ENCODE measurements at regions of chr14 and their contacts with region 1.

Region 1: DNA sequence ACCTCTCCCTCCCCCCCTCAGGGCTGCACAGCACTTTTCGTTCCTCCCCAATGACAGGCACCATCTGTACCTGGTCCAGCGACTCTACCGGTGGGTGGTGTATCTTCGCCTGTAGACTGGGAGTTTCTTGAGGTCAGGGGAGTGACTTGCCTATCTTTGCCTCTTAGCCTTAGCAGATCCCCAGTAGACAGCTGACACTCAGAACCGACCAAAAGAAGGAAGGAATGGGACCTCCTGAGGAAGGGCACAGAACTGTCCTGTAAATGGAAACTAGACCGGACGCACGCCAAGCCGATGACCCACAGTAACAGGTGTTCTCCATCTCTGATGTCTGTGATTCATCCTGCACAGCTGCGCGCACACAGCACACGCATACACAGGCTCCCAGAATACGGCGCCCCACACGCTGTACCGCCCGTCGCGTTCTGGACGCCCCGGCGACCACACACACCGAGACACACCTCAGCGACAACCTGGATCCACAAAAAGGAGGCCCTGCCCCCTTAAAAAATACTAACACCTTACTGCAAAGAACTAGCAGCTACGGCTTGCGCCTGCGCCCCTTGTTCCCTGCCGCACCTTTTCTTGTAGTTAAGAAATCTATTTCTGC is 673 bp upstream of the TTC9 start:
- DNase-seq: peak; percentile 77
- H3K4me3 Mint-ChIP-seq: peak overlapping the region; percentile 92
- H3K27ac Mint-ChIP-seq: peak overlapping the region; percentile 90
- H3K4me1 Mint-ChIP-seq: peaks cover 43% of the 10 kb centered on the region
- H3K27me3 Mint-ChIP-seq: no peaks in the 10 kb centered on the region

Region 2: DNA sequence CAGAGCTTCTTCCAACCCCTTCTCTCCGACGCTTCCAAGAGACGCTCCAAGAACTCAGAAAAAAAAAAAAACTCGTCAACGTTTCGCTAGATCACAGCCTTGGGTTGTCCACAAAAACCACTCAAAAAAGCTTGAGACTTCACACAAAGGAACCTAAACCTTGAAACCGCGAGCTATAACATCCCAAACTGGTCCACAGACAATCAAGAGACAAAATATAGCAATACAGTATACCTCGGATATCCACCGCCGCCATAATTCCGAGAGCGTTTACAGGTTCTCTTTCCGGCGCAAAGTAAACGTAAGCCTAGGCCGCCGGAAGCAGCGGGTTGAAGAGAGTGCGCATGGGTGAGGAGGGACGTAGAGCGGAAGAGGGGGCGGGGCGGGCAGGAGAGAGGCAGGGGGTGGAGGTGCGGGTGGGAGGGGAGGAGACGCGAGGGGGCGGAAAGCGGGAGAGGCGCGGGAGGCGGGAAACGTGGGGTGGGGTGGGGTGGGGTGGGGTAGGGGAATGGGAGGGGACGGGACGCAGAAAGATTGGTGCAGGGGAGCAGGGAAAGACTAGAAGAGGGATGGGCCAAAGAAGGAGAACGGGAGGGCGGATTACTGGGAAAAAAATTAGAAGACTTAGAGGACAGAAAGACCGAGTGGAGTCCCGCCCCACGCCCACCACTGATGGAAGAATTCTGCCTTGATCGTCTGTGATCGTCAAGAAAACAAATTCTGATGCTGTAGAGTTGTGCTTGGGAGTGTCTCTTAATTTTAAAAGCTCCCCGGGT is 40.5 kb before region 1 on chr14 and contains the start of gene MED6:
- CTCF ChIA-PET with region 1: no interaction called
- intact Hi-C with region 1: loop called (anchors 2 kb)
- DNase-seq: peak; percentile 96
- H3K4me3 Mint-ChIP-seq: peak within 1 kb of the TSS; percentile 98
- H3K27ac Mint-ChIP-seq: peak within 1 kb of the TSS; percentile 93
- H3K4me1 Mint-ChIP-seq: peaks cover 23% of the 10 kb centered on the region
- H3K27me3 Mint-ChIP-seq: peaks cover 2% of the 10 kb centered on the region
- total RNA-seq, gene MED6: 48.5 to 48.9 TPM

Region 3: DNA sequence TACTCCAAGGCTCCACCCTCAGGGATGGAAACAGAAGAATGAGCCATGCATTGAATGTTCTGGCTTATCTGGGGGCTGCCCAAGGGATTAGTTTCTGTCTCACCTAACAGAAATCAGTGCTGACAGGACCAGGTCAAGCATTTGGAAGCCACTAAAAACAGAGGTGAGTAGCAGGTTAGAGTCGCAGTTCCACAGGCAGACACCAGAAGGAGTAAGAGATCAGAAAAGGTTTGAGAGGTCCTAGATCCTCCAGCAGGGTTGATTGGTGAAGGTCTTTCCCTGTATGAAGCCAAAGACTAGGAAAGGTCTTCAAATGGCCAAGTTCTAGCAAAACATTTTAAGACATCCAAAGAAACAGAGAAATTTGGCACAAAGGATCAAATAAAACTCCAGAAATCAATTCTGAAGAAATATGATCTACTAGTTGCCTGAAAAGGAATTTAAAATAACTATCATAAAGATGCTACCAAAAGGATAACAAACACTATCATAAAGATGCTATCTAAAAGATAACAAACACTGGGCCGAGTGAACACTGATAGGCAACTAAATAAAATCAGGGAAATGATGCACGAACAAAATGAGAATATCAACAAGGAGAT is 18.8 kb before region 1 on chr14:
- CTCF ChIA-PET with region 1: interaction called, 4 read pairs
- intact Hi-C with region 1: loop called (anchors 1 kb)
- DNase-seq: peak; percentile 72
- H3K4me3 Mint-ChIP-seq: no peak overlapping the region
- H3K27ac Mint-ChIP-seq: no peak overlapping the region
- H3K4me1 Mint-ChIP-seq: no peaks in the 10 kb centered on the region
- H3K27me3 Mint-ChIP-seq: no peaks in the 10 kb centered on the region

Region 4: DNA sequence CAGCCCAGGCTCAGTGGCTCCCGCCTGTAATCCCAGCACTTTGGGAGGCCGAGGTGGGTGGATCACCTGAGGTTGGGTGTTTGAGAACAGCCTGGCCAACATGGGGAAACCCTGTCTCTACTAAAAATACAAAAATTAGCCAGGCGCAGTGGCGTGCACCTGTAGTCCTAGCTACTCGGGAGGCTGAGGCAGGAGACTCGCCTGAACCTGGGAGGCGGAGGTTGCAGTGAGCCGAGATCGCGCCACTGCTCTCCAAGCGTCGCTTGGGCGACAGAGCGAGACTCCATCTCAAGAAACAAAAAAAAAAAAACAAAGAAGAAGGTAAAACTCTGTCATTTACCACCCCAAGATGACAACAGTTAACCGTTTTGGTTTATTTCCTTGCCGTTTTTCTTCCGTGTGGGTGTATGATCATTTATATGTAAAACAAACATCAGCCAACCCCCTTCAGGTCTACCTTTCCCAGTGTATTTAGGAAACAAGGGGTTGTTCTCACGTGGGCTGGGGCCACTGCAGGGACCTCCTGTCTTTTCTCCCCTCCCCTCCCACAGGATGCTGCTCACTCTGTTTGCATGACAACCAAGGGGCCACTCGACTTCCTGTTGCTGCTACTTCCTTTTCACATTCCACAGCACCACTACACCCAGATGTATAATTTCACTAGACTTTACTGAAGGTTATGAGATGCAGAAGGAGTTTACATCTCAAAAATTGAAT is 14.2 kb after region 1 on chr14:
- CTCF ChIA-PET with region 1: interaction called, 11 read pairs
- intact Hi-C with region 1: loop called (anchors 1 kb)
- DNase-seq: peak; percentile 92
- H3K4me3 Mint-ChIP-seq: peak overlapping the region; percentile 83
- H3K27ac Mint-ChIP-seq: peak overlapping the region; percentile 98
- H3K4me1 Mint-ChIP-seq: peaks cover 81% of the 10 kb centered on the region
- H3K27me3 Mint-ChIP-seq: no peaks in the 10 kb centered on the region

Region 5: GRCh38 chr14:70660949-70661893 is 20.2 kb after region 1 on chr14:
- CTCF ChIA-PET with region 1: interaction called, 11 read pairs
- intact Hi-C with region 1: loop called (anchors 1 kb)
- DNase-seq: peak; percentile 82
- H3K4me3 Mint-ChIP-seq: peak overlapping the region; percentile 62
- H3K27ac Mint-ChIP-seq: peak overlapping the region; percentile 96
- H3K4me1 Mint-ChIP-seq: peaks cover 91% of the 10 kb centered on the region
- H3K27me3 Mint-ChIP-seq: no peaks in the 10 kb centered on the region

Region 6: GRCh38 chr14:70714055-70714621 is 73.1 kb after region 1 on chr14:
- CTCF ChIA-PET with region 1: interaction called, 10 read pairs
- intact Hi-C with region 1: loop called (anchors 1 kb)
- DNase-seq: peak; percentile 71
- H3K4me3 Mint-ChIP-seq: no peak overlapping the region
- H3K27ac Mint-ChIP-seq: no peak overlapping the region
- H3K4me1 Mint-ChIP-seq: peaks cover 2% of the 10 kb centered on the region
- H3K27me3 Mint-ChIP-seq: no peaks in the 10 kb centered on the region

Region 7: DNA sequence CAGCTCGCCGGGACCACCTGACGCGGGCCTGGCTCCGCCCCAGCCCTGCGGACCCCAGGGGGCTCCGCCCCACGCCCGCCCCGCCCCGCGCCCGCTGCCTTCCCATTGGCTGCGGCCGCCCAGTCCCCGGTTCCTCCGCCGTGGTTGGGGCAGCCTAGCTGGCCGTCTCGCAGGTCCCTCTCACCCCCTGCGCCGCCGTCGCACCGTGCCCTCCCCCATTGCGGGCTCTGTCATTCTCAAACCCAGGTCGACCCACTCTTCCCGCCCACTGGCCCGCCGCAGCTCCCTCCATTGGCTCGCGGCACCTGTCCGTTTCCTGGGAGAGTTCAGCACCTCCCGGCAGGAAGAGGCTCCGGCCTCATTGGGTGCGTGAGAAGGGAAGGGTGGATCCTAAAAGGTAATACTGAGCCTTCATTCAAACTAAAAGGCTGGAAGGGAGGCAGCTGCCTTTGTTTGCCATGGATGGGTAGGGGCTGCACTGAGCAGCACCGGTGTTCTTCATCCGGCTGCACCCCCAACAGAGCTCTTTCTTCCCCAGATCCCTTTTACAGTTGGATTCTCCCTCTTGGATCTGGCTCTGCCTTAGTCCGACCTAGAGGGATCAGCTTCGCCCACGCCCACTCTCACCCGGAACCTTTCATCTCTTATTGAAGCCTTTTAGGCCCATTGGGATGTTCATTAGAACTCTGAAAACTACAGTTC is 168.7 kb after region 1 on chr14:
- CTCF ChIA-PET with region 1: no interaction called
- intact Hi-C with region 1: loop called (anchors 1 kb)
- DNase-seq: peak; percentile 96
- H3K4me3 Mint-ChIP-seq: no peak overlapping the region
- H3K27ac Mint-ChIP-seq: peak overlapping the region; percentile 57
- H3K4me1 Mint-ChIP-seq: peaks cover 9% of the 10 kb centered on the region
- H3K27me3 Mint-ChIP-seq: no peaks in the 10 kb centered on the region

Region 8: DNA sequence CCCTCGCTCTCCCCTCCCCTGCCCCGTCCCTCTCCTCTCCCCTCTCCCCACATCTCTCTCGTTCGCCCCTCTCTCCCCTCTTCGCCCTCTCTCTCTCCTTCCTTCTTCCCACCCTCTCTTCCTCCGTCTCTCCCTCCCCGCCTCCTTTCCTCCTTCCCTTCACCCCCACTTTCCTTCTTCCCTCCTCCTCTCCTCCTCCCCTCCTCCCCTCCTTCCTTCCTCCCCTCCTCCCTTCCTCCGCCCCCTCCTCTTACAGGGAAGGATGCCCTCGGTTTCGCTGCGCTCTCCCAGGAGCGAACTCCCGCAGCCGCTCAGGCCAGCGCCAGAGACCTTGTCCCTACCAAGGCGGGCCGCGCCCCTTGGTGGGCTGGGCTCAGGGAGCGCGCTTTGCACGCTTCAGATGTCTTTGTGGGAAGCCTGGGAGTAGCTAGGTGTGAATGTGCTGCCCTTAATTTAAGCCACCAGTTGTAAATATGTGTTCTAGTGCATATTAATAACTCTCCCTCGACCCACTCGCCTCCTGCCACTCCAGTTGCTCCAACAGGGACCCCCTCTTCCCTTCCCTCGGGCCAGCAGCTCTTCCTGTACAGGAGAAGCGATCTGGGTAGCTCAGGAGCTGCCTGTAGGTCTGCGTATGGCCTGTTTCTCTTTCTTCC is 181.6 kb after region 1 on chr14:
- CTCF ChIA-PET with region 1: no interaction called
- intact Hi-C with region 1: no loop called
- DNase-seq: peak; percentile 37
- H3K4me3 Mint-ChIP-seq: peak overlapping the region; percentile 79
- H3K27ac Mint-ChIP-seq: peak overlapping the region; percentile 53
- H3K4me1 Mint-ChIP-seq: peaks cover 20% of the 10 kb centered on the region
- H3K27me3 Mint-ChIP-seq: peaks cover 24% of the 10 kb centered on the region